Naive thymus-derived CD4-positive, alpha-beta T cell (primary cell): ENCODE measurements at regions of chr12 and their contacts with region 1.

Region 1: GRCh38 chr12:46153268-46153872 is 115.5 kb downstream of the SLC38A1 start:
- DNase-seq: peak in 6 of 9 donors; percentile 26 to 61 (median 47)
- ATAC-seq: no peak
- H3K4me3 ChIP-seq: no peak overlapping the region
- H3K4me3 Mint-ChIP-seq: peak overlapping the region in 4 of 10 donors; percentile 31 to 52 (median 40)
- H3K27ac ChIP-seq: no peak overlapping the region
- H3K27ac Mint-ChIP-seq: no peak overlapping the region
- H3K4me1 ChIP-seq: peaks cover 0 to 17% of the 10 kb centered on the region in 2 donors
- H3K4me1 Mint-ChIP-seq: peaks cover 3 to 31% (median 13%) of the 10 kb centered on the region in 7 donors
- H3K27me3 ChIP-seq: no peaks in the 10 kb centered on the region
- H3K27me3 Mint-ChIP-seq: peaks cover 0 to 19% (median 4%) of the 10 kb centered on the region in 5 donors

Region 2: DNA sequence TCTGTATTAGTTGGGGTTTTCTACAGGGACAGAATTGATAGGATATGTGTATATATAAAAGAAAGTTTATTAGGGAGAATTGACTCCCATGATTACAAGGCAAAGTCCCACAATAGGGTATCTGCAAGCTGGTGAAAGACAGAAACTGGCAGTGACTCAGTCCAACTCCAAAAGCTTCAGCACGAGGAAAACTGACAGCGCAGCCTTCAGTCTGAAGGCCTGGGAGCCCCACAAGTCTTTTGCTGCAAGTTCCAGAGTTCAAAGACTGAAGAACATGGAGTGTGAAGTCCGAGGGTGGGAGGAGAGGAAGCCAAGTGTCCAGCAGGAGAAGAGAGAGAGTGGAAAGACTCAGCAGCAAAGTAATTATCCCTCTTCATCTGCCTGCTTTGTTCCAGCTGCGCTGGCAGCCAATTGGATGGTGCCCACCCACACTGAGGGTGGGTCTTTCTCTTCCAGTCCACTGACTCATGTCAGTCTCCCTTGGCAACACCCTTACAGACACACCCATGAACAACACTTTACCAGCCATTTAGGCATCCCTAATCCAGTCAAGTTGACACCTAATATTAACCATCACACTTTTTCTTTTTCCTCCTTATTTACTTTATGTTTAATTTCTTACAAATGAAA is 52.4 kb before region 1 on chr12:
- CTCF ChIA-PET with region 1: no interaction called
- POLR2A ChIA-PET with region 1: no interaction called
- intact Hi-C with region 1: no loop called
- DNase-seq: no peak
- ATAC-seq: no peak
- H3K4me3 ChIP-seq: no peak overlapping the region
- H3K4me3 Mint-ChIP-seq: no peak overlapping the region
- H3K27ac ChIP-seq: no peak overlapping the region
- H3K27ac Mint-ChIP-seq: no peak overlapping the region
- H3K4me1 ChIP-seq: no peaks in the 10 kb centered on the region
- H3K4me1 Mint-ChIP-seq: no peaks in the 10 kb centered on the region
- H3K27me3 ChIP-seq: no peaks in the 10 kb centered on the region
- H3K27me3 Mint-ChIP-seq: peaks cover 0 to 22% (median 16%) of the 10 kb centered on the region in 5 donors

Region 3: DNA sequence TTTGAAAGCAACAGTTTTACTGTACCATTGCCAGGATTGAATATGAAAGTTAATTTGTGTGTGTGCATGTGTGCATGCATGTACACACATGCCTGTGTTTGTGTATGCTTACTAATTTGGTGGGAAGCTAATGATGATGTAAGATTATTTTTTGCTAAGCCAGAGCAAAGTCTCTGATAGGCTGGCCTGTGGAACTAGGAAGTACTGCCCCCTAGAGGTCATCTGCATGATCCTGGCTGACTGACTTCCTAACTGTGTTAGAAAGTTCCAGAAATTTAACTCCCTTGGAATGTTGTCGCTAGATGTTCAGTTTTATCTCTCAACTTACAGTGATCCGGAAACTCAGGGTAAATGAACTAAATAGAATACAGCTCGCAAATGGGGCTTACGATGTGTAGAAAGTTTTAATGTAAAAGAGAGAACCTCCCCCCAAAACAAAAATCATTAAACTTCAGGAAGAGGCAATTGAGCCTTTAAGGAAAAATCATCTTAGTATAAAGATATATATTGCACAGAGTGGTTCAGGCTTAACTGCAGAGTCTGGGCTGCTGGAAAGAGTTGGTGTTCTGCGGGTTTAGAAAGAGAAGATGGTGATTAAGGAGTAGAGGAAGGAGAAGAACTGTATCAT is 149.8 kb after region 1 on chr12:
- CTCF ChIA-PET with region 1: interaction called, 19 read pairs
- POLR2A ChIA-PET with region 1: interaction called, 13 read pairs
- intact Hi-C with region 1: loop called (anchors 1 kb)
- DNase-seq: peak in 7 of 9 donors; percentile 40 to 66 (median 57)
- ATAC-seq: peak; percentile 91
- H3K4me3 ChIP-seq: no peak overlapping the region
- H3K4me3 Mint-ChIP-seq: no peak overlapping the region
- H3K27ac ChIP-seq: no peak overlapping the region
- H3K27ac Mint-ChIP-seq: peak overlapping the region in 2 of 9 donors; percentile 1 to 7
- H3K4me1 ChIP-seq: no peaks in the 10 kb centered on the region
- H3K4me1 Mint-ChIP-seq: peaks cover 5 to 20% (median 15%) of the 10 kb centered on the region in 7 donors
- H3K27me3 ChIP-seq: no peaks in the 10 kb centered on the region
- H3K27me3 Mint-ChIP-seq: peaks cover 0 to 22% (median 0%) of the 10 kb centered on the region in 5 donors

Region 4: GRCh38 chr12:46675736-46676135 is 522.4 kb after region 1 on chr12:
- CTCF ChIA-PET with region 1: interaction called, 3 read pairs
- POLR2A ChIA-PET with region 1: no interaction called
- intact Hi-C with region 1: loop called (anchors 1 to 5 kb)
- DNase-seq: peak in 5 of 9 donors; percentile 24 to 38 (median 34)
- ATAC-seq: no peak
- H3K4me3 ChIP-seq: no peak overlapping the region
- H3K4me3 Mint-ChIP-seq: no peak overlapping the region
- H3K27ac ChIP-seq: no peak overlapping the region
- H3K27ac Mint-ChIP-seq: no peak overlapping the region
- H3K4me1 ChIP-seq: no peaks in the 10 kb centered on the region
- H3K4me1 Mint-ChIP-seq: peaks cover 0 to 16% (median 0%) of the 10 kb centered on the region in 7 donors
- H3K27me3 ChIP-seq: no peaks in the 10 kb centered on the region
- H3K27me3 Mint-ChIP-seq: peaks cover 0 to 3% (median 0%) of the 10 kb centered on the region in 5 donors

Region 5: GRCh38 chr12:46983393-46984266 is 830.3 kb after region 1 on chr12:
- CTCF ChIA-PET with region 1: no interaction called
- POLR2A ChIA-PET with region 1: no interaction called
- intact Hi-C with region 1: loop called (anchors 1 to 10 kb)
- DNase-seq: peak in 6 of 9 donors; percentile 5 to 54 (median 31)
- ATAC-seq: peak; percentile 74
- H3K4me3 ChIP-seq: no peak overlapping the region
- H3K4me3 Mint-ChIP-seq: peak overlapping the region in 1 of 10 donors; percentile 13
- H3K27ac ChIP-seq: no peak overlapping the region
- H3K27ac Mint-ChIP-seq: peak overlapping the region in 1 of 9 donors; percentile 6
- H3K4me1 ChIP-seq: peaks cover 3 to 8% of the 10 kb centered on the region in 2 donors
- H3K4me1 Mint-ChIP-seq: peaks cover 0 to 10% (median 9%) of the 10 kb centered on the region in 7 donors
- H3K27me3 ChIP-seq: no peaks in the 10 kb centered on the region
- H3K27me3 Mint-ChIP-seq: peaks cover 17 to 29% (median 26%) of the 10 kb centered on the region in 5 donors

Region 6: GRCh38 chr12:48013287-48013686 is 1859.9 kb after region 1 on chr12:
- CTCF ChIA-PET with region 1: no interaction called
- POLR2A ChIA-PET with region 1: no interaction called
- intact Hi-C with region 1: no loop called
- DNase-seq: no peak
- ATAC-seq: no peak
- H3K4me3 ChIP-seq: no peak overlapping the region
- H3K4me3 Mint-ChIP-seq: no peak overlapping the region
- H3K27ac ChIP-seq: no peak overlapping the region
- H3K27ac Mint-ChIP-seq: no peak overlapping the region
- H3K4me1 ChIP-seq: no peaks in the 10 kb centered on the region
- H3K4me1 Mint-ChIP-seq: no peaks in the 10 kb centered on the region
- H3K27me3 ChIP-seq: no peaks in the 10 kb centered on the region
- H3K27me3 Mint-ChIP-seq: peaks cover 31 to 80% (median 40%) of the 10 kb centered on the region in 5 donors